ENCODE measurements at regions of chr17 and their contacts with region 1.

Region 1: DNA sequence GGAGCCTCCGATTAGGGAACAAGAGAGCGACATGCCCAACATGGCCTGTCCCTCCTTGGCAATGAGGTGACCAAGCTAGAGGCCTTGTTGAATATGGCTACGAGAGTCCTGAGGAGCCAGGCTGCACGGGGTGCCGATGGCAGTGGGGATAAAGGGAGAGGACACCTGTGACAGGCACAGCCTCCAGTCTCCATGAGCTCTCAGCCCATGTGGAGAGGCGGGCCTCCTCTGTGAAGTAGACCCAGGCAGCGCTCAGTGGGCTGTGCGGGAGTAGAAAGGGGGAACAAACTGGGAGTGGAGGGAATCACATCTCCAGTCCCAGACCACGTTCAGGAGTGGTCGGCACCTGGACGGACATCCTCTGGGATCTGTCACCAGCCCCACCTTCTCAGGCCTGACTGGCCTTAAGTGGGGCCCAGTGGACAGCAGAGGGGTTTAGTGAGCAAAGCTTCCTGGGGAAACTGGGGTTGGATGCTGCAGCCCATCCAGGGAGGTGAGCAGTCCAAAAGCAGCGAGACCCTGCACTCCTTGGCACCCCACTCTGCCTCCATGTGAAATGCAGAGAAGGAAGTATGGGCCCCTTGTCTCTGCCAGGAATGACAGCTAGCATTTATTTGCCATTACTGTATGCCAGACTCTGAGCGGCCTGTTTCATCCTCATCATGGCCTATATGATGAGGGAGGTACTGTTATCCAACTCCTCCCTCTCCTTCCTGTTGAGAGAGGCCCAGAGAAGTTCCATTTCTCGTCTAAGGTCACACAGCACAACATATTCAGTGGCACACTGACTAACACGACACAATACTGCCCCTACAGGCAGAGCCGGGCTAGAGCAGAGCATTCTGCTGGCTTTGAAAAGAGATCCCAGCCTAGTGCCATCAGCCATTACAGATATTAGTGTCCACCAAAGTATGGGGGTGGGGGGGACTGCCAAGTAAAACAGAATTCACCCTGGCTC is 4.5 kb upstream of the TMEM92 start:
- DNase-seq: peak; percentile 82
- ATAC-seq: peak; percentile 80
- H3K4me3 Mint-ChIP-seq: no peak overlapping the region
- H3K27ac Mint-ChIP-seq: no peak overlapping the region
- H3K4me1 Mint-ChIP-seq: peaks cover 11% of the 10 kb centered on the region
- H3K27me3 Mint-ChIP-seq: peaks cover 12% of the 10 kb centered on the region

Region 2: DNA sequence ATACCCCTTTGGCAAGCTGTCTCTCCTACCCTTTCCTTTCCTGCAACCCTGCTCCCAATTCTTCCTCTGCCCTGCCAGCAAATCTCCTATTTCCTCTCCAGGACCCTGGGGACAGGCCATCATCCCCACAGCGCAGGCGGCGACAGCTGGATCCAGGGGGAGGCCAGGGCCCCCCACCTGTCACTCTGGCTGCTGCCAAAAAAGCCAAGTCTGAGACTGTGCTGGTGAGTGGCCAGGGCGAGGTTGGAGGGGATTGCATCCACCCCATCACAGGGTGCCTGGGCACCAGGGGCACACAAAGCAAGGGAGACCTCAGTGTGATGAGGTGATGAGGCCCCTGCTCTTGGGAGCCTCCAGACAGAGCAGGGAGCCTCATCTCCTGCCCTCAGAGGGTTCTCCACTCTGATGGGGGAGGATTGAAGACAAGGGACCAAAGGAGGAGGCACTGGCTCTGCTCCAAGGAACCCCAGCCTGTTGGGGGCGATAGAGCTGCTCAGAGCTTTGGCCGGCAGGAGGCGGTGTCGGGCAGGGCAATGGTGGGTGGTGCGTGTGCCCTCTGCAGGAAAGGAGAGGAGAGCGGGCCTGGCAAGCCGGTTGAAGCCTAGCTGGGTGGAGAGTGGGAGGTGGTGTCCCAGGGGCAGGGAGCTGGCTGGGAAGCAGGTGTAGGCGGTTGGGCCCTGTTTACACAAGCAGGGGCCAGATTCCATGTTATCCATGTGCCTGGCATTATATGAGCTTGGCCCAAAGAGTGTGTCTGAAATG is 190.2 kb before region 1 on chr17:
- CTCF ChIA-PET with region 1: no interaction called
- DNase-seq: no peak
- ATAC-seq: peak; percentile 23
- H3K4me3 Mint-ChIP-seq: no peak overlapping the region
- H3K27ac Mint-ChIP-seq: no peak overlapping the region
- H3K4me1 Mint-ChIP-seq: no peaks in the 10 kb centered on the region
- H3K27me3 Mint-ChIP-seq: no peaks in the 10 kb centered on the region

Region 3: DNA sequence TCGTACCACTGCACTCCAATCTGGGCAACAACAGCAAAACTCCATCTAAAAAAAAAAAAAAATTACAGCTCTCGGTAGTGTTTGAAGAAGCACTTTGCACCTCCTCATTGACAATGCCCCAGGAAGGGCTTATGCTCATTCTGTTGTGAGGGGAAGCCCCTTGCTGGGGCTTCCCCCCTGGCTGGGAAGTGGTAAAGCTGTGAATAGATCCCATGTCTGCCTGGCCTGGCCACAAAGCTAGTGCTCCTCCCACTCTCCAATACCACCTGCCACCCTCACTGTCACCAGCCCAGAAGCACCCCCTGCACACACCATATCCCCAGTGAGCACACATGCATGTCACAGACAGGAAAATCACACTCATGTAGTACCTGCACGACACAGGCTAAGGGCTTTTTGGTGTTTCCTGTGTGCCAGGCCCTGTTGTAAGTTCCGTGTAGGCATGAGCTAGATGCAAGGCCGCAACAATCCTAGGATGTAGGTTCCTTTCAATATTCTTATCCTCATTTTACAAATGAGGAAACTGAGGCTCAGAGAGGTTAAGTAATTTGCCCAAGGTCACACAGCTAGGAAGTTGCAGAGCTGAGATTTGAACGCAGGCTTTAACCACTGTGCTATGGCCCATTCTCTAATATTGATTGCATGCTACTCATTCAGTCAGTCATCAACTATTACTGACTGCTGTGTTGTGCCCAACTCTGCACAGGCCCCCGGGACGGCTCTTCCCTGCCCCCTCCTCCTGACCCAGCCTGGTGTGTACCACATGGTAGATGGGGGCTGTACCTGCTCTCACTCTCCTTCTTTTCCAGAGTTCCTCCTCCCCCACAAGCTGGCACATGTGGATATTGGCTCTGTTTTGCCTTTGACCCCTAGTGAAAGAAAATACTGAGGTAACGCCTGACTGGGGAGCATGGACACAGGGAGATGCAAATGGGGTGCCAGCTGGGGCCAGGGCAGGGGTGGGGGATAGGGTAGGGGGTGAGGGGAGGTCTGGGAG is 56.4 kb before region 1 on chr17:
- CTCF ChIA-PET with region 1: interaction called, 26 read pairs
- DNase-seq: peak; percentile 73
- ATAC-seq: peak; percentile 88
- H3K4me3 Mint-ChIP-seq: no peak overlapping the region
- H3K27ac Mint-ChIP-seq: no peak overlapping the region
- H3K4me1 Mint-ChIP-seq: peaks cover 12% of the 10 kb centered on the region
- H3K27me3 Mint-ChIP-seq: peaks cover 63% of the 10 kb centered on the region

Region 4: DNA sequence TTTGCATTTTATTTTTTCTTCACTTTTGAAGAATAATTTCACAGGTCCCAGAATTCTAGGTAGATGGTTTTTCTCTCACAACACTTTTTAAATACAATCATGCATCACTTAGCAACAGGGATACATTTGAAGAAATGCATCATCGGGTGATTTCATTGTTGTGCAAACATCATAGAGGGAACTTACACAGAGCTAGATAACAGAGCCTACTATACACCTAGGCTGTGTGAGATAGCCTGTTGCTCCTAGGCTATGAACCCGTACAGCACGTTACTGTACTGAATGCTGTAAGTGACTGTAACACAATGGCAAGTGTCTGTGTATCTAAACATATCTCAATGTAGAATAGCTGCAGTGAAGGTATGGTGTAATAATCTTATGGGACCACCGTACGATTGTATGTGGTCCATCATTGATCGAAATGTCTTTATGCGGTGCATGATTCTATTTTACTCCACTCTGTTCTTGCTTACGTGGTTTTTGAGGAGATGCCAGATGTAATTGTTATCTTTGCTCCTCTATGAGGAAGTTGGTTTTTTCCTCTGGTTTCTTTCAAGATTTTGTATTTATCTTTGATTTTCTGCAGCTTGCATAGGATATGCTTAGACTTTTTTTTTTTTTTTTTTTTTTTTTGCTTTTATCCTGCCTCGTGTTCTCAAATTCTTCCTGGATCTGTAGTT is 31.0 kb before region 1 on chr17:
- CTCF ChIA-PET with region 1: no interaction called
- DNase-seq: no peak
- ATAC-seq: no peak
- H3K4me3 Mint-ChIP-seq: no peak overlapping the region
- H3K27ac Mint-ChIP-seq: no peak overlapping the region
- H3K4me1 Mint-ChIP-seq: no peaks in the 10 kb centered on the region
- H3K27me3 Mint-ChIP-seq: peaks cover 57% of the 10 kb centered on the region

Region 5: DNA sequence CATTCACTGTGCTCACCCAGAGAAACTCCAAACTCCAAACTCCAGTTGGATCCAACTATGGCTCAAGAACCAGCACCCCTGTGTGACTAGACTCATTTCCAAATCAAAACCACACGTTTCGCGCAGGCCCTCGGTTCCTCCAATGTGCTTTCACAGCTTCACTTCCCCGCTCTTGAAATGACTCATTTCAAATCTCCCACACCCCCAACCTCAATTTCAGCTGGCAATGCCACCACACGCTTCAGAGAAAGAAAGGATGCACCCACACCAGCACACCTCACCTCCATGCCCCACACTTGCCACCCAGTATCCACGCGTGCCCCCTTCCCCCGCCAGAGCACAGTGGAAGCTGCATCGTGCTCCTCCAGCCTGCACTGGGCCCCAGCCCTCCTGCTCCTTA is 13.5 kb after region 1 on chr17:
- CTCF ChIA-PET with region 1: interaction called, 106 read pairs
- DNase-seq: peak; percentile 74
- ATAC-seq: peak; percentile 66
- H3K4me3 Mint-ChIP-seq: no peak overlapping the region
- H3K27ac Mint-ChIP-seq: no peak overlapping the region
- H3K4me1 Mint-ChIP-seq: peaks cover 26% of the 10 kb centered on the region
- H3K27me3 Mint-ChIP-seq: peaks cover 23% of the 10 kb centered on the region

Region 6: DNA sequence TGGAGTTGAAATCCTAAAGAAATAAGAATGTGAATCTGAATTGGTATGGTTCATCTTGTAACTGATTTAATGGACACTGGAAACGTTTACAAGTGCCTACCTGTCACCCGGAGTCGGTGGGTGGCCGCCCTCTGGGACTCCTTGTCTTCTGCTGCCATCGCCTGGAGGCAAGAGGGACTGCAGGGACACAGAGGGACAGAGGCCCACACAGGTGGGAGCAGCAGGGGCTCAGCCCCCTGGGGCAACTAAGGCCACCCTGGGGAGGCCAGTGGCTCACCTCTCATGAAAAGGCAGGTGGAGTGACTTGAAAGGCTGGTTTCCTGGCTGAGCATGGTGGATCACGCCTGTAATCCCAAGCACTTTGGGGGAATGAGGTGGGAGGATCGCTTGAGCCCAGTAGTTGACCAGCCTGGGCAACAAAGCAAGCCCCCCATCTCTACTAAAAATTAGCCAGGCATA is 27.7 kb after region 1 on chr17:
- CTCF ChIA-PET with region 1: interaction called, 106 read pairs
- DNase-seq: peak; percentile 85
- ATAC-seq: peak; percentile 94
- H3K4me3 Mint-ChIP-seq: no peak overlapping the region
- H3K27ac Mint-ChIP-seq: no peak overlapping the region
- H3K4me1 Mint-ChIP-seq: peaks cover 12% of the 10 kb centered on the region
- H3K27me3 Mint-ChIP-seq: peaks cover 5% of the 10 kb centered on the region

Measured in activated CD8-positive, alpha-beta memory T cell treated with anti-CD3 and anti-CD28 coated beads, Interleukin-2, amount 10 ng/mL, durations not matched to agents 7 days and 5 days (primary cell).